Activated naive CD4-positive, alpha-beta T cell treated with anti-CD3 and anti-CD28 coated beads for 36 hours (primary cell): ENCODE measurements at regions of chr15 and their contacts with region 1.

Region 1: GRCh38 chr15:42650208-42651066 is 75.0 kb downstream of the STARD9 start:
- DNase-seq: peak; percentile 84
- H3K4me3 Mint-ChIP-seq: no peak overlapping the region
- H3K27ac Mint-ChIP-seq: no peak overlapping the region
- H3K4me1 Mint-ChIP-seq: no peaks in the 10 kb centered on the region
- H3K27me3 Mint-ChIP-seq: no peaks in the 10 kb centered on the region

Region 2: DNA sequence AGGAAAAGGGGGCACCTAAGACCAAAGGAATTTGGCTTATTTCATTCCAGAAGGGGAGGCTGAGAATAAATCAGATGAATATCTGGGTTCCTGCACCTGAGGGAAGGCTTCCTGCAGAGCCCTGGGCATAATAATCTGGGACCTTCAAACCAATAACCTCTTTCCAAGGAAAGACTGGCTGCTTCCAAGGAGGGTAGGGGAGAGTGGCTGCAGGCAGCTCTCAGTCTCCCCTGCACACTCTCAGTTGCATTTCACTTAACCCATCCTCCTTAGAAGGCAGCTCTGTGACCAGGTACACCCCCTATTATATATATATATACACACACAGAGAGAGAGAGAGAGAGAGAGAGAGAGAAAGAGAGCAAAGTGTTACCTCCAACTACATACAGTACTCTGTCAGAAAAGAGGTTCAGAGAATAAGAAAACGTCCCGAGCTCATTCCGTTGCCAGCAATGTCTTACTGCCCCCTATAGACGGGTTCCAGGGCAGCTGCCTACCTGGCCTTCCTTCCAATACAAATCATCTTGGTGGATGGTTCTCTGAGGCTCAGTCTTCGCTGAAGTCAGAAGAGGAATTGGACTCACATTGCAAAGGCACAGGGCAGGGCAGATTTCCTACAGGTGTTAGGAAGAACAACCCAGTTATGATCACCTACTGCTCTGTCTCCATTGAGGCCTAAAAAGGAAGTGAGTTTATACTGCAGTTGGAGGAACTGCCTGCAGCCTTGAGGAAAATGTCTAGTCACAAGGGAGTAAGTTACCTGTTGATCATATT is 265.0 kb before region 1 on chr15:
- CTCF ChIA-PET with region 1: no interaction called
- intact Hi-C with region 1: loop called (anchors 5 kb)
- DNase-seq: peak; percentile 64
- H3K4me3 Mint-ChIP-seq: no peak overlapping the region
- H3K27ac Mint-ChIP-seq: no peak overlapping the region
- H3K4me1 Mint-ChIP-seq: no peaks in the 10 kb centered on the region
- H3K27me3 Mint-ChIP-seq: no peaks in the 10 kb centered on the region

Region 3: GRCh38 chr15:42474827-42475226 is 175.6 kb before region 1 on chr15:
- CTCF ChIA-PET with region 1: no interaction called
- intact Hi-C with region 1: loop called (anchors 1 kb)
- DNase-seq: no peak
- H3K4me3 Mint-ChIP-seq: no peak overlapping the region
- H3K27ac Mint-ChIP-seq: no peak overlapping the region
- H3K4me1 Mint-ChIP-seq: peaks cover 7% of the 10 kb centered on the region
- H3K27me3 Mint-ChIP-seq: no peaks in the 10 kb centered on the region

Region 4: GRCh38 chr15:42495361-42496212 is 154.8 kb before region 1 on chr15 and contains the start of gene SNAP23:
- CTCF ChIA-PET with region 1: no interaction called
- intact Hi-C with region 1: loop called (anchors 5 kb)
- DNase-seq: peak; percentile 87
- H3K4me3 Mint-ChIP-seq: peak within 1 kb of the TSS; percentile 99
- H3K27ac Mint-ChIP-seq: peak within 1 kb of the TSS; percentile 94
- H3K4me1 Mint-ChIP-seq: peaks cover 65% of the 10 kb centered on the region
- H3K27me3 Mint-ChIP-seq: no peaks in the 10 kb centered on the region
- total RNA-seq, gene SNAP23: 33.1 to 34.5 TPM